Activated CD8-positive, alpha-beta T cell treated with anti-CD3 and anti-CD28 coated beads for 36 hours (primary cell): ENCODE measurements at regions of chr2 and their contacts with region 1.

Region 1: DNA sequence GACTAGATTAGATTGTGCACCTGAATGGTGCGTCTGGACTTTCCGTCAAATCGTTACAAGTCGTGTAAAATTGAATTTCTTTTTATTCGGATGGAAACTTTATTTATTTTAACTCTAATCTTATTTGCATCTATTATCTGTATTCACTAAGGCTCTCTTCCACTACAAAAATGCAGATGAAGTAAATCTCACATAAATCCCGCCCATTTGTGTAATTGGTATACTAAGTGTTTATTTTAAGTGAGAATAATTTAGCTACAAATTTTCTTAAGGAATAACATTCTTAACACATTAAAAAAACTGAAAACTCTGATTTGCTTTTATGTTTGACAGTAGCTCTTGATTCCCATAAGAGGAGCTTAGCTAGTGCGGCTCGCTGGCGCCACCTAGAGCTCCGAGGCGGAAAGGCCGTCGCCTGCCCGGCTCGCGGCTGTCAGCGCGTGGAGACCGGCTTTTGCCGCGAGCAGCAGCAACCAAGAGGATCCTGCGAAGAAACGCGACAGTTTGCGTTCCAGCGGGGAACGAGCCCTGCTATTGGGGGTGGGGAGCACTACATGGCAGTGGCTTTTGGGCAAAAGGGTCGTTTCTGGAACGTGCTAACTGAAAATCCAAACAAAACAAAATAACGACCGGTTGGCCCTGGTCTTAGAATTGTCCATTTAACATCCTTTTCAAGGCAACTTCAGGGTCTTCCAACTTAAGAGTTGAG is 6.7 kb downstream of the SP9 start:
- DNase-seq: peak; percentile 92
- ATAC-seq: peak; percentile 70
- H3K4me3 Mint-ChIP-seq: peak overlapping the region; percentile 60
- H3K27ac Mint-ChIP-seq: no peak overlapping the region
- H3K4me1 Mint-ChIP-seq: peaks cover 29% of the 10 kb centered on the region
- H3K27me3 Mint-ChIP-seq: peaks cover 63% of the 10 kb centered on the region
- CTCF ChIP-seq: peak; percentile 98

Region 2: DNA sequence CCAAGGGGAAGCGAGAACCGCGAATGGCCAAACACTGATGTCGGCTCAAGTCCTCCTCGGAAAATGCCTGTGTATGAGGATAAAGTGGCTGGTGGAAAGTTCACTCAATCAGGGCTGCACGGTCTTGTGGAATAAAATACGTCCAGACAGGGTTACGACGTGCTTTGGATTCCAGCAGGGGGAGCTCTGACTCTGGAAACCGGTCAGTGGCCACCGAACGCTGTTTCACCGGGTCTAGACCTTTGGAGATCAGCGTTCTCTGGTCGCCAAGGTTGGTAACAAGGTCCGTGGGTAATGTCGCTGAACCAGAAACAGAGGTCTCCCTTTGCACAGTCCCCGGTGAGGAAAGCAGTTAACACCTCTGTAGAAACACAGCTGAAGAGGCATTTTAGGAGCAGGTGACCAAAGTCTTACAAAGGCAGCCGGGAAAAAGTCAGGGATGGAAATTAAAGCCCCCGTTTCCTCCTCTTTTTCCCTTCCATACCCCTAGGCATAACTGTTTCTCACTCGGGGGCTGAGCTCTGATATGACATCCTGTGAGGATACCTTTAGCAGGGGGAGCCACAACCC is 939.0 kb before region 1 on chr2:
- CTCF ChIA-PET with region 1: interaction called, 17 read pairs
- POLR2A ChIA-PET with region 1: no interaction called
- intact Hi-C with region 1: loop called (anchors 5 kb)
- DNase-seq: peak; percentile 84
- ATAC-seq: peak; percentile 87
- H3K4me3 Mint-ChIP-seq: no peak overlapping the region
- H3K27ac Mint-ChIP-seq: no peak overlapping the region
- H3K4me1 Mint-ChIP-seq: peaks cover 4% of the 10 kb centered on the region
- H3K27me3 Mint-ChIP-seq: peaks cover 34% of the 10 kb centered on the region
- CTCF ChIP-seq: peak; percentile 81

Region 3: GRCh38 chr2:173884025-173884802 is 457.2 kb before region 1 on chr2:
- CTCF ChIA-PET with region 1: interaction called, 10 read pairs
- POLR2A ChIA-PET with region 1: no interaction called
- intact Hi-C with region 1: no loop called
- DNase-seq: peak; percentile 47
- ATAC-seq: peak; percentile 51
- H3K4me3 Mint-ChIP-seq: no peak overlapping the region
- H3K27ac Mint-ChIP-seq: no peak overlapping the region
- H3K4me1 Mint-ChIP-seq: no peaks in the 10 kb centered on the region
- H3K27me3 Mint-ChIP-seq: peaks cover 25% of the 10 kb centered on the region
- CTCF ChIP-seq: peak; percentile 18

Region 4: DNA sequence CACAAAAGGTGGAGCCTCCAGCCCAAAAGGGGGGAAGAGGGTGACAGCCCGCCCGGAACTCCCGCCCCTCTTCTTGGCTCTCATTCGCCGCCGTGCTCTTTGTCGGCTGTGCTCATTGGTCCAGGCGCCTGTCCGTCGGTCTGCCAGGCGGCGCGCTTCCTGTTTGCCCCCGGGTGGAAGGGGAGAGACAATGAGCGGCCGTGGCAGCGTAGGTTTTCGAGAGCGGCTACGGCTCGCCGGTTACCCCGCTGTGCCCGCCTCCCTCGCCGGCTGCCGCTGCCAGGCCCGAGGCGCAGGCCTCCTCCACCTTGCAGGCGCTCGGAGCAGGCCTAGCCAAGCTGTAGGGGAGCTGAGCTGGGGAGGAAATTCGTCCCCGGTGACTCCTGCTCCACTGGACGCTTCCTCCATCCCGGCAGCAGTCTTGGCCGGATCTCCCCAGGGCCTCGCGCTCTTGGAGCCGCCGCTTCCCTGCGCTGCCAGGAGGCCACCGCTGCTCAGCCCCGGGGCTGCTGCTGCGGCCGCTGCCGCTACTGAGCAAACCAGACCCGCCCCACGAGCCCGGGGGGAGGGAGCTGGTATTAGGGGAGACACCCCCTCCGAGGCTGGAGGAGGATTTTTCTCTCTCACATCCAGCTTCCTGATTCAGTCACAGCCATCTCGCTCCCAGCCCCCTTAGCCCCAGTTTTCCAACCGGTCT is 376.0 kb before region 1 on chr2 and contains the start of gene SP3:
- CTCF ChIA-PET with region 1: interaction called, 3 read pairs
- POLR2A ChIA-PET with region 1: no interaction called
- intact Hi-C with region 1: loop called (anchors 10 kb)
- DNase-seq: peak; percentile 96
- ATAC-seq: peak; percentile 76
- H3K4me3 Mint-ChIP-seq: peak within 1 kb of the TSS; percentile 88
- H3K27ac Mint-ChIP-seq: peak within 1 kb of the TSS; percentile 95
- H3K4me1 Mint-ChIP-seq: peaks cover 24% of the 10 kb centered on the region
- H3K27me3 Mint-ChIP-seq: no peaks in the 10 kb centered on the region
- CTCF ChIP-seq: no peak
- total RNA-seq, gene SP3: 80.5 to 84.0 TPM

Region 5: GRCh38 chr2:174138161-174138560 is 203.3 kb before region 1 on chr2:
- CTCF ChIA-PET with region 1: interaction called, 8 read pairs
- POLR2A ChIA-PET with region 1: no interaction called
- intact Hi-C with region 1: loop called (anchors 5 kb)
- DNase-seq: peak; percentile 5
- ATAC-seq: no peak
- H3K4me3 Mint-ChIP-seq: no peak overlapping the region
- H3K27ac Mint-ChIP-seq: no peak overlapping the region
- H3K4me1 Mint-ChIP-seq: no peaks in the 10 kb centered on the region
- H3K27me3 Mint-ChIP-seq: no peaks in the 10 kb centered on the region
- CTCF ChIP-seq: peak; percentile 11

Region 6: DNA sequence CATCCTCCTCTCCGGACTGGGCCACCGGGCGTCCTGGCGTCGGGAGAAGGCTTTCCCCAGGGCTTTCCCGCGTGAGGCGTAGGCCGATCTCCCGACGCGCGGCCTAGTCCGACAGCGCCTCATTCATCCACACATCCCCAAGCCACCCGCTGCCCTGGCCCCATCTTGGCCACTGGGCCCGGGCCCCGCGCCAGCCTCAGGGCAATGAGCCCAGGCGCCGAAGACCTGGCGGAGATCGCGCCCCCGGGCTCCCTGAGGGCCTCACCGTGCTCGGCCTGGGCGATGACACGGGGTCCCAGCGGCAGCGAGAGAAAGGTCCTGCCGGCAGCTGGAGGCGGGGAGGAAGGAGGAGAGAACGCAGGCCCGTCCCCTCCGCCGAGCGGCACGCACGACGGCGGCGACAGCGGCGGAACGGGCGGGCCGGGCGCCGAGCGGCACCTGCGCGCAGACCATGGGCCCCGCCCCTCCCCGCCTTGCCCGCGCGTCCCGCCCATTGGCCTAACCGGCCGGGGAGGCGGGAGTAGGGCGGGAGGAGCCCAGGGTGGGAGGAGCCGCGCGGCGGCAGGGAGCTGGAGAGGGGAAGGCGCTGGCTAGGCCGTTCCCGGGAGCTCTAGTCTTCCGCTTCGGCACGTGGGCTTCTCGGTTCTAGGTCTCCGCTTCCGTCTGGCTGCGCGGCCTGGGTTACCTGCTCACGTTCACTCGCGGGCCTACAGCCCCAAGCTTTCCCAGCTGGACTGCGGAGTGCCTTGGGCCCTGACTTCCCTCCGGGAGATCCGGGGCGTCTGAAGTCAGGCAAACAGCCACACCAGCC is 93.0 kb before region 1 on chr2 and contains the start of gene OLA1:
- CTCF ChIA-PET with region 1: interaction called, 10 read pairs
- POLR2A ChIA-PET with region 1: interaction called, 3 read pairs
- intact Hi-C with region 1: no loop called
- DNase-seq: peak; percentile 96
- ATAC-seq: peak; percentile 99
- H3K4me3 Mint-ChIP-seq: peak within 1 kb of the TSS; percentile 83
- H3K27ac Mint-ChIP-seq: peak within 1 kb of the TSS; percentile 90
- H3K4me1 Mint-ChIP-seq: peaks cover 25% of the 10 kb centered on the region
- H3K27me3 Mint-ChIP-seq: no peaks in the 10 kb centered on the region
- CTCF ChIP-seq: no peak
- total RNA-seq, gene OLA1: 128 to 137 TPM

Region 7: DNA sequence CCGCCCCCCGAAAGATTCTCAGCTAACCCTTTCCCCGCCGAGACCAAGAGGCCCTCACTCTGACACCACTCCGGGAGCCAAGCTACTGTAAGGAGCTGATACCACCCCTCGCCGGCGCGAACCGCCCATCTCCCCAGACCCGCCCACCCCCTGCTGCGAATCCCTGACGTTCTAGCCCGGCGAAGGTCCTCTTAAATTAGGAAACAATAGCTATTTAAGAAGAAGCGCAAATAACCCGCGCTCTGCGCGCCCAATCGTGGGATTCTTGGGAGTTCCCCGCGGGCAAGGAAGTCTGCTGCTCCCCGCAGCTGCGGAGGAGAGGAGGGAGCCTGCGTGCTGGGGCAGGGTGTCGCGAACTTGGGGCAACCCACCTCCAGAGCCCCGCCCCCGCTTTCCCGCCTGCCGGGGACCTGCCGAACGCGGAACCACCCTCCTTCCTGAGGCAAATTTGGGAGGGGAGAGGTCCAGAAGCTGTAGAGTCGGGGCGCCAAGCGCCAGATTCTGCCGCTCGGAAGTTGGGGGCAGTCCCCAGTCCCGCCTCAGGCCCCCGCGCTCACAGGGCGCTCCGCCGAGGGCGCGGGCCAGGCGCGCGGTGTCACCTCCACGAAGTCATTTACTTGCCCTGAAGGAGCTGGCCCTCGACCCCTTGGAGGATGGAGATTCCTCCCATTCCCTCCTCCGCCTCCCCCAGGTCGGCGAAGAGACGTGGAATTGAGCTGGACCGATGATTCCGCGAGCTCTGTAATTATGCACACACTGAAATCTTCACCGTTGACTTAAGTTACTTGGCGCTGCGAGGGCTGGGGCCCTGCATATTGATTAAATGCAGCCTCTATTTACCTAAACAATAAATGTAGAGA is 15.0 kb before region 1 on chr2:
- CTCF ChIA-PET with region 1: interaction called, 36 read pairs
- POLR2A ChIA-PET with region 1: interaction called, 9 read pairs
- intact Hi-C with region 1: no loop called
- DNase-seq: peak; percentile 39
- ATAC-seq: peak; percentile 49
- H3K4me3 Mint-ChIP-seq: peak overlapping the region; percentile 55
- H3K27ac Mint-ChIP-seq: no peak overlapping the region
- H3K4me1 Mint-ChIP-seq: peaks cover 20% of the 10 kb centered on the region
- H3K27me3 Mint-ChIP-seq: peaks cover 73% of the 10 kb centered on the region
- CTCF ChIP-seq: no peak